ENCODE measurements at regions of chr6 and their contacts with region 1.

Region 1: DNA sequence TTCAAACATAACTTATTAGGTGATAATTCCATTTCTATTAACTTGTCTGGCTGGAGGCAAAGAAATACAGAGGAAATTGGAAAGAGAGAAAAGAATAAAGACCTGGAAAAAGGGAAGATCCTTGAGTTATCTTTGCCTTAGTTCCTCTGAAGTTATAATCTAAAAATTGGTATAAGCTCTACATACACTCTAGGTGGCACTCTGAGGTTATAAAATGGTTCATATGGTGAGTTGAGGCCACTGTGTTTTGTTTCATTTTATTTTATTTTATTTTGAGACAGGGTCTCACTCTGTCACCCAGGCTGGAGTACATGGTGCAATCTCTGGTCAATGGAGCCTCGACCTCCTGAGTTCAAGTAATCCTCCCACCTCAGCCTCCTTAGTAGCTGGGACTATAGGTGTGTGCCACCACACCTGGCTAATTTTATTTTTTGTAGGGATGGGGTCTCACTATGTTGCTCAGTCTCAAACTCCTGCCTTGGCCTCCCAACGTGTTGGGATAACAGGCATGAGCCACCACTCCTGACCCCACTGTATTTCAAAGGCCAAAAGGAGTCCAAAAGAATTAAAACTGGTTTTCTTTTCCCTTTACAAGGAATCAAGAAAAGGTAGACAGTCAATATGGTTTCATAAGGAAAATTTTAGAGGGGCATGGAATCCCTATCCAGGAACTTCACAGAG is 19.4 kb downstream of the GPX6 start:
- DNase-seq: peak in 2 of 9 experiments; percentile 11 to 30
- ATAC-seq: no peak
- H3K4me3 ChIP-seq: no peak overlapping the region
- H3K4me3 Mint-ChIP-seq: no peak overlapping the region
- H3K27ac ChIP-seq: no peak overlapping the region
- H3K27ac Mint-ChIP-seq: no peak overlapping the region
- H3K4me1 ChIP-seq: no peaks in the 10 kb centered on the region
- H3K4me1 Mint-ChIP-seq: no peaks in the 10 kb centered on the region
- H3K27me3 ChIP-seq: no peaks in the 10 kb centered on the region
- H3K27me3 Mint-ChIP-seq: peaks cover 35% of the 10 kb centered on the region
- CTCF ChIP-seq: no peak

Region 2: DNA sequence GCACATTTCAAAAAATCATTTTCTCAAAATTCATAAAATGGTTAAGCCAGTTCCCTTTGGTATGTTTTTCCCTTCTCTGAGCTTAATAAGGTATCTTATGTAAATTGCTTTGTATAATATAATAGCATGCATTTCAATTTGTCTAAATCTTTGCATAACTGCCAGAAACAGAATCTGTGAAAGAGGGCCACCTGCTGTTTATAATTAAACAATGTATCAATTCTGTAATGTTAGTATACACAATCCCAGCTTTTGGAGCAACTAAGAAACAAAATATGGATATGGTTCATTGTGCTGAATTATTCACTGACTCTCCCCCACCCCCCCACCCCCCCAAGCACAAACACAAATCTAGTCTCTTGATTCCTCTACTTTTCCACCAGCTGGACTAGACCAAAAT is 84.2 kb after region 1 on chr6:
- CTCF ChIA-PET with region 1: interaction called, 6 read pairs
- POLR2A ChIA-PET with region 1: no interaction called
- intact Hi-C with region 1: loop called (anchors 1 to 5 kb)
- DNase-seq: peak in 1 of 9 experiments; percentile 24
- ATAC-seq: no peak
- H3K4me3 ChIP-seq: no peak overlapping the region
- H3K4me3 Mint-ChIP-seq: no peak overlapping the region
- H3K27ac ChIP-seq: no peak overlapping the region
- H3K27ac Mint-ChIP-seq: no peak overlapping the region
- H3K4me1 ChIP-seq: no peaks in the 10 kb centered on the region
- H3K4me1 Mint-ChIP-seq: no peaks in the 10 kb centered on the region
- H3K27me3 ChIP-seq: peaks cover 0 to 2% of the 10 kb centered on the region in 2 experiments
- H3K27me3 Mint-ChIP-seq: peaks cover 30% of the 10 kb centered on the region
- CTCF ChIP-seq: peak; percentile 21

Region 3: GRCh38 chr6:28586962-28587745 is 90.9 kb after region 1 on chr6:
- CTCF ChIA-PET with region 1: interaction called, 6 read pairs
- POLR2A ChIA-PET with region 1: no interaction called
- intact Hi-C with region 1: loop called in 1 of 2 experiments (anchors 5 kb)
- DNase-seq: peak; percentile 11 to 78 (median 58)
- ATAC-seq: peak; percentile 77
- H3K4me3 ChIP-seq: peak overlapping the region; percentile 46 to 58
- H3K4me3 Mint-ChIP-seq: peak overlapping the region; percentile 82
- H3K27ac ChIP-seq: no peak overlapping the region
- H3K27ac Mint-ChIP-seq: no peak overlapping the region
- H3K4me1 ChIP-seq: peaks cover 13% of the 10 kb centered on the region
- H3K4me1 Mint-ChIP-seq: peaks cover 23% of the 10 kb centered on the region
- H3K27me3 ChIP-seq: peaks cover 28 to 36% of the 10 kb centered on the region in 2 experiments
- H3K27me3 Mint-ChIP-seq: peaks cover 77% of the 10 kb centered on the region
- CTCF ChIP-seq: no peak

Region 4: DNA sequence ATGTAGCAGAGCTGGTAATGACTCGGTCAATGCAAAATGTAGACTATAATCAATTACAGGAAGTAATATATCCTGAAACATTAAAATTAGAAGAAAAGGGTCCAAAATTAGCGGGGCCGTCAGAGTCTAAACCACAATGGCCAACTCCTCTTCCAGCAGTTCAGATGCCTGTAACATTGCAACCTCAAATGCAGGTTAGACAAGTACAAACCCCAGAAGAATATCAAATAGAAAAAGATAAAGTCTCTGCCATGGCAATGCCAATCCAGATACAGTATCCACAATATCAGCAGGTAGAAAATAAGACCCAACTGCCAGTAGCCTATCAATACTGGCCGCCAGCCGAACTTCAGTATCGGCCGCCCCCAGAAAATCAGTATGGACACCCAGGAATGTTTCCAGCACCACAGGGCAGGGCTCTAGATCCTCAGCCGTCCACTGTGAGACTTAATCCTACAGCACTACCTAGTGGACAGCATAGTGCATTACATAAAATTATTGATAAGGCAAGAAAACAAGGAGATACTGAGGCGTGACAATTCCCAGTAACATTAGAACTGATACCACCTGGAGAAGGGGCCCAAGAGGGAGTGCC is 187.8 kb after region 1 on chr6:
- CTCF ChIA-PET with region 1: no interaction called
- POLR2A ChIA-PET with region 1: no interaction called
- intact Hi-C with region 1: loop called in 1 of 2 experiments (anchors 2 kb)
- DNase-seq: peak in 3 of 9 experiments; percentile 2 to 60 (median 43)
- ATAC-seq: peak; percentile 80
- H3K4me3 ChIP-seq: no peak overlapping the region
- H3K4me3 Mint-ChIP-seq: no peak overlapping the region
- H3K27ac ChIP-seq: no peak overlapping the region
- H3K27ac Mint-ChIP-seq: no peak overlapping the region
- H3K4me1 ChIP-seq: no peaks in the 10 kb centered on the region
- H3K4me1 Mint-ChIP-seq: peaks cover 8% of the 10 kb centered on the region
- H3K27me3 ChIP-seq: peaks cover 7 to 14% of the 10 kb centered on the region in 2 experiments
- H3K27me3 Mint-ChIP-seq: peaks cover 80% of the 10 kb centered on the region
- CTCF ChIP-seq: peak; percentile 62